ENCODE measurements at regions of chr18 and their contacts with region 1.

Region 1: DNA sequence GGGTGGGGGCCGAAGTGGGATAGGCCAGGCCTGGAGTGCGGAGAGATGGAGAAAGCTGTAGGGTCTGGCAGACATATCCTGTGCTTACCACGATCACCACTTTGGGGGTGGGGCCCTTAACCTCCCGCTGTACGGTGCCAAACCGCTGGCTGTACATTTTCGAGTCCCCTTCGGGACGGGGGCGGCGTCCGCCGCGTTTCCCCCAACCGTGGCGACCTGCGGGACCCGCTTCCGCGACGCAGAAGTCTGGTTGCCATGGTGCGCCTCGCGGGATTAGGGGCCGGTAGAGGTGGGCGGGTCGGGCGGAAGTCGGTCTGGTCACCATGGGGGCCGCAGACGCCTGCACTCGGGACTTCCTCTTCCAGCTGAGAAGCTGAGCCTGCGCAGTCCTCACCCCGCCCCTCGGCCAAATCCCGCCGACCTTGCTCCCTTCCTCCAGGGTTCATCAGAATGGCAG is at the start of gene CFAP53:
- DNase-seq: peak; percentile 91
- ATAC-seq: peak; percentile 80
- H3K4me3 Mint-ChIP-seq: peak within 1 kb of the TSS; percentile 89
- H3K27ac Mint-ChIP-seq: peak within 1 kb of the TSS; percentile 88
- H3K4me1 Mint-ChIP-seq: peaks cover 28% of the 10 kb centered on the region
- H3K27me3 Mint-ChIP-seq: no peaks in the 10 kb centered on the region
- CTCF ChIP-seq: no peak
- total RNA-seq, gene CFAP53: 0.27 and 0.29 TPM in 2 replicates

Region 2: GRCh38 chr18:49206717-49207116 is 1059.6 kb before region 1 on chr18:
- CTCF ChIA-PET with region 1: no interaction called
- POLR2A ChIA-PET with region 1: no interaction called
- intact Hi-C with region 1: no loop called
- DNase-seq: no peak
- ATAC-seq: no peak
- H3K4me3 Mint-ChIP-seq: no peak overlapping the region
- H3K27ac Mint-ChIP-seq: no peak overlapping the region
- H3K4me1 Mint-ChIP-seq: peaks cover 9% of the 10 kb centered on the region
- H3K27me3 Mint-ChIP-seq: no peaks in the 10 kb centered on the region
- CTCF ChIP-seq: no peak

Region 3: GRCh38 chr18:49459404-49460171 is 806.7 kb before region 1 on chr18:
- CTCF ChIA-PET with region 1: no interaction called
- POLR2A ChIA-PET with region 1: no interaction called
- intact Hi-C with region 1: loop called (anchors 1 kb)
- DNase-seq: no peak
- ATAC-seq: peak; percentile 23
- H3K4me3 Mint-ChIP-seq: peak overlapping the region; percentile 88
- H3K27ac Mint-ChIP-seq: peak overlapping the region; percentile 77
- H3K4me1 Mint-ChIP-seq: peaks cover 45% of the 10 kb centered on the region
- H3K27me3 Mint-ChIP-seq: no peaks in the 10 kb centered on the region
- CTCF ChIP-seq: no peak

Region 4: GRCh38 chr18:49813319-49814146 is 452.7 kb before region 1 on chr18 and contains the start of gene ACAA2:
- CTCF ChIA-PET with region 1: no interaction called
- POLR2A ChIA-PET with region 1: no interaction called
- intact Hi-C with region 1: loop called (anchors 1 kb)
- DNase-seq: peak; percentile 79
- ATAC-seq: peak; percentile 88
- H3K4me3 Mint-ChIP-seq: peak within 1 kb of the TSS; percentile 96
- H3K27ac Mint-ChIP-seq: peak within 1 kb of the TSS; percentile 95
- H3K4me1 Mint-ChIP-seq: peaks cover 24% of the 10 kb centered on the region
- H3K27me3 Mint-ChIP-seq: no peaks in the 10 kb centered on the region
- CTCF ChIP-seq: no peak
- total RNA-seq, gene ACAA2: 24.9 and 26.9 TPM in 2 replicates

Region 5: DNA sequence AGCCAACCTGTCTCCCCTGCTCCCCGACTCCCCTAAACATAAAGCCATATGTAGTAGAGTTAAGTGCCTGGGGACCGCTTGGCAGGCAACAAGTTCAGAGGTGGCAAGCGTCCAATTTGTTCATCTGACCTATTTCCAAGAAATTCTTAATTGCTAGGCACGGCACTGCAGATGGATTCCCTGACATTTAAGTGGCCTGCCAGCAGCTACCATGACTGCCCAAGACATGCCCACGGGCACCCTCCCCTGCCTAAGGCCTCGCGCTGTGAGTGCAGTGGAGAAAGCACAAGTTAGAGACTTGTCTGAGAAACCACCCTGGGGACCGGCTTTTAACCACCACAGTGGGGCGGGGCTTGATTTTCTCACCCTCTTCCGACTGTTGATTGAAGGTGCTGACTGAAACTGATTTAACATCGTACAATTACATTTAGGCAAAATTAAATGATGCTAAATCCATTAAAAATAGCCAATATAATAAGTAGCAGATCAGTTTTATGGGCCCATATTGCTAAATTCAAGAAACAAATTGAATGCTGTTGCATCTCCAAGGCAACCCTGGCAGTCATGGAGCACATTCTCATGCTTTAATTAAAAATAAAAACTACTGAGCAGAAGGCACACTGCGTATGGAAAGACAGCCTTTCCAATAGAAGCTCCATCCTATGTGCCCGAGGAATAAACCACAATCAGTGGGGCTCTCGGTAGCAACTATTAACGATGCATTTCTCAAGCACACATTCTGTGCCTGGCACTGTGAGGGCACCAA is 289.3 kb before region 1 on chr18:
- CTCF ChIA-PET with region 1: no interaction called
- POLR2A ChIA-PET with region 1: no interaction called
- intact Hi-C with region 1: no loop called
- DNase-seq: no peak
- ATAC-seq: no peak
- H3K4me3 Mint-ChIP-seq: no peak overlapping the region
- H3K27ac Mint-ChIP-seq: no peak overlapping the region
- H3K4me1 Mint-ChIP-seq: no peaks in the 10 kb centered on the region
- H3K27me3 Mint-ChIP-seq: peaks cover 5% of the 10 kb centered on the region
- CTCF ChIP-seq: no peak

Region 6: GRCh38 chr18:50218432-50219197 is 47.7 kb before region 1 on chr18:
- CTCF ChIA-PET with region 1: interaction called, 22 read pairs
- POLR2A ChIA-PET with region 1: no interaction called
- intact Hi-C with region 1: loop called (anchors 1 kb)
- DNase-seq: peak; percentile 16
- ATAC-seq: peak; percentile 60
- H3K4me3 Mint-ChIP-seq: no peak overlapping the region
- H3K27ac Mint-ChIP-seq: no peak overlapping the region
- H3K4me1 Mint-ChIP-seq: peaks cover 4% of the 10 kb centered on the region
- H3K27me3 Mint-ChIP-seq: peaks cover 25% of the 10 kb centered on the region
- CTCF ChIP-seq: no peak

Region 7: GRCh38 chr18:50250935-50251334 is 15.3 kb before region 1 on chr18:
- CTCF ChIA-PET with region 1: no interaction called
- POLR2A ChIA-PET with region 1: no interaction called
- intact Hi-C with region 1: no loop called
- DNase-seq: no peak
- ATAC-seq: no peak
- H3K4me3 Mint-ChIP-seq: no peak overlapping the region
- H3K27ac Mint-ChIP-seq: no peak overlapping the region
- H3K4me1 Mint-ChIP-seq: no peaks in the 10 kb centered on the region
- H3K27me3 Mint-ChIP-seq: peaks cover 3% of the 10 kb centered on the region
- CTCF ChIP-seq: no peak

Region 8: GRCh38 chr18:50307738-50308470 is 41.6 kb after region 1 on chr18:
- CTCF ChIA-PET with region 1: no interaction called
- POLR2A ChIA-PET with region 1: interaction called, 3 read pairs
- intact Hi-C with region 1: loop called (anchors 1 kb)
- DNase-seq: peak; percentile 68
- ATAC-seq: peak; percentile 97
- H3K4me3 Mint-ChIP-seq: peak overlapping the region; percentile 88
- H3K27ac Mint-ChIP-seq: peak overlapping the region; percentile 66
- H3K4me1 Mint-ChIP-seq: peaks cover 46% of the 10 kb centered on the region
- H3K27me3 Mint-ChIP-seq: no peaks in the 10 kb centered on the region
- CTCF ChIP-seq: no peak

Region 9: GRCh38 chr18:50707855-50708469 is 441.7 kb after region 1 on chr18:
- CTCF ChIA-PET with region 1: no interaction called
- POLR2A ChIA-PET with region 1: no interaction called
- intact Hi-C with region 1: no loop called
- DNase-seq: no peak
- ATAC-seq: no peak
- H3K4me3 Mint-ChIP-seq: no peak overlapping the region
- H3K27ac Mint-ChIP-seq: no peak overlapping the region
- H3K4me1 Mint-ChIP-seq: no peaks in the 10 kb centered on the region
- H3K27me3 Mint-ChIP-seq: peaks cover 10% of the 10 kb centered on the region
- CTCF ChIP-seq: no peak